ENCODE measurements at regions of chr16 and their contacts with region 1.

Region 1: GRCh38 chr16:68310761-68311511 is at the starts of genes PRMT7 and SLC7A6OS:
- DNase-seq: peak; percentile 87
- ATAC-seq: peak; percentile 99
- H3K4me3 Mint-ChIP-seq: peak within 1 kb of the TSS; percentile 98
- H3K27ac Mint-ChIP-seq: peak within 1 kb of the TSS; percentile 93
- H3K4me1 Mint-ChIP-seq: peaks cover 38% of the 10 kb centered on the region
- H3K27me3 Mint-ChIP-seq: no peaks in the 10 kb centered on the region
- CTCF ChIP-seq: no peak
- total RNA-seq, gene PRMT7: 41.8 and 50.3 TPM in 2 replicates
- total RNA-seq, gene SLC7A6OS: 34.8 and 42.0 TPM in 2 replicates

Region 2: DNA sequence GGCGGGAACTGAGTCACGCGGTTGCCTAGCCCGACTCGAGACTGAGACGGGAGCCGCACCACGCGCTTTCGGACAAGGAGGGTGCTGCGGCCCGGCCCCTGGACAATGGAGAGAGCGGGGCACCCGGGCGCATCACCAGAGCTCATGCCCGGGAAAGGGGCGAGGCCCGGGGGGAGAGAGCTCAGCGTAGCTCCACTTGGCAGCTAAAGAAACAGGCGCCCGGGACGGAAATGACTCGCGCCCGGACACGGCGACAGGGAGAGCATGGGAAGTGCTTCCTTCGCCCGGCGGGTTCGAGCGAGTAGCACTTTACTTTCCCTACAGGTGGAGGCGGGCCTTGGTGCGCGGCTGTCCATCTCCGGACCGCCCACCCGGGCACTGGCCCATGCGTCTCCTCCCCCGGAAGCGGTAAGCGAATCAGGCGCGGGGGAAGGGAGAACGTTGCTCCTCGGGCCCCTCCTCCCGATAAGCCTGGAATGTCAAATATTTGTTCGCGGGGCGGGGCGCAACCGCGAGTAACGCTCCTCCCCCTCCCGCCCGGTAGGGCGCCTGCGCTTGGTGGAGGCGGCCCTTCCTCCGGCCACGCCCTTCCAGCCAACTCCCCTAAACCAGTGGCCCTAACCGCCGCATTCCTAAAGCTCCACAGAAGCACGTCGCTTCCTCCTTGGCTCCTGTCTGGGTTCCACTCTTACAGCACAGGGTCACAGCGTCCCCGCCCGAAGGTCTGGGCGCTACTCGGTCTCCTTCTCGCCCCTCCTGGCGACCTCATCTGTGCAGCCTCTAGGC is 73.5 kb before region 1 on chr16:
- CTCF ChIA-PET with region 1: interaction called, 4 read pairs
- POLR2A ChIA-PET with region 1: interaction called, 6 read pairs
- intact Hi-C with region 1: loop called (anchors 1 kb)
- DNase-seq: peak; percentile 84
- ATAC-seq: peak; percentile 83
- H3K4me3 Mint-ChIP-seq: peak overlapping the region; percentile 93
- H3K27ac Mint-ChIP-seq: peak overlapping the region; percentile 79
- H3K4me1 Mint-ChIP-seq: peaks cover 33% of the 10 kb centered on the region
- H3K27me3 Mint-ChIP-seq: no peaks in the 10 kb centered on the region
- CTCF ChIP-seq: no peak

Region 3: GRCh38 chr16:68328151-68328859 is 17.4 kb after region 1 on chr16:
- CTCF ChIA-PET with region 1: interaction called, 4 read pairs
- POLR2A ChIA-PET with region 1: interaction called, 4 read pairs
- intact Hi-C with region 1: loop called (anchors 1 kb)
- DNase-seq: peak; percentile 61
- ATAC-seq: peak; percentile 100
- H3K4me3 Mint-ChIP-seq: no peak overlapping the region
- H3K27ac Mint-ChIP-seq: no peak overlapping the region
- H3K4me1 Mint-ChIP-seq: peaks cover 14% of the 10 kb centered on the region
- H3K27me3 Mint-ChIP-seq: no peaks in the 10 kb centered on the region
- CTCF ChIP-seq: peak; percentile 99

Measured in activated B cell treated with CpG ODN at 0.5 μM for 24 hours (primary cell).